ENCODE measurements at regions of chr9 and their contacts with region 1.

Region 1: DNA sequence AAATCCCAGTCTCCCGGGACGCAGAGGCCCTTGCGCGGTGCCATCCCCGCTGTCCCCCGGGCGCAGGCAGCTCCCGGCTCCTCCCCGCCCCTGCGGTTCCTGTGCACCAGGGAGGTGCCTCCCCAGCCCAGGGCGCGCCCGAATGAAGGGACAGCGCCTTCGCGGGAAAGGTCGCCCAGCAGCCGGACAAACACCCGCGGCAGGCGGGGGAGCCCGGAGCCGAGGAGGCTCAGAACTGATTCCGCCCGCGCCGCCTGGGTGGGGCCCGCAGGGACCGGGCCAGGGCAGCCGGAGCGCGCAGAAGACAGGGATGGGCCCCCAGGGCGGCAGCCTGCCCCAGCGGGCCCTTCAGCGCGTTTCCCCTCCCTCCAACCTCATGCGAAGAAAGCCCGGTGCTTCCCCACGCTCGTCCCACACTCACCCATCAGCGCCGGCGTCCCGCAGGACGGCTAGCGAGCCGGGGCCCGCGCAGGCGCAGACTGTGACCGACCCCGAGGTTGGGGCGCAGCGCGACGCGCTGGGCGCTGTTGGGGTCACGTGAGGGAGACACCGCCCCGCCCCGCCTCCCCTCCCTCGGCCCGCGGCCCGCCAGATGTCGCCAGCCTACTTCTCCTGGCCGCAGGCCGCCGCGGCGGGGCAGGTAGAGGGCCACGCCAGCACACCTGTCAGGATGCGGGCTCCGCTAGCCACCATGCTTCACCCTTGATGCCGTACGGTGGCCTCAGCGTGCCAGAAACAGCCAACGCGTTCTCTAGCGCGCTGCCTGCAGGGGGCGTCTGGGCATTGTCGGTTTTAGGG is at the start of gene SLC25A51:
- DNase-seq: peak; percentile 94
- H3K4me3 ChIP-seq: peak within 1 kb of the TSS; percentile 29 to 90 (median 74)
- H3K27ac ChIP-seq: peak within 1 kb of the TSS; percentile 5
- H3K4me1 ChIP-seq: peaks cover 21% of the 10 kb centered on the region
- H3K27me3 ChIP-seq: no peaks in the 10 kb centered on the region
- CTCF ChIP-seq: peak; percentile 98 to 100
- POLR2A ChIP-seq: peak; percentile 80
- total RNA-seq, gene SLC25A51: 36.2 and 38.3 TPM in 2 replicates

Region 2: DNA sequence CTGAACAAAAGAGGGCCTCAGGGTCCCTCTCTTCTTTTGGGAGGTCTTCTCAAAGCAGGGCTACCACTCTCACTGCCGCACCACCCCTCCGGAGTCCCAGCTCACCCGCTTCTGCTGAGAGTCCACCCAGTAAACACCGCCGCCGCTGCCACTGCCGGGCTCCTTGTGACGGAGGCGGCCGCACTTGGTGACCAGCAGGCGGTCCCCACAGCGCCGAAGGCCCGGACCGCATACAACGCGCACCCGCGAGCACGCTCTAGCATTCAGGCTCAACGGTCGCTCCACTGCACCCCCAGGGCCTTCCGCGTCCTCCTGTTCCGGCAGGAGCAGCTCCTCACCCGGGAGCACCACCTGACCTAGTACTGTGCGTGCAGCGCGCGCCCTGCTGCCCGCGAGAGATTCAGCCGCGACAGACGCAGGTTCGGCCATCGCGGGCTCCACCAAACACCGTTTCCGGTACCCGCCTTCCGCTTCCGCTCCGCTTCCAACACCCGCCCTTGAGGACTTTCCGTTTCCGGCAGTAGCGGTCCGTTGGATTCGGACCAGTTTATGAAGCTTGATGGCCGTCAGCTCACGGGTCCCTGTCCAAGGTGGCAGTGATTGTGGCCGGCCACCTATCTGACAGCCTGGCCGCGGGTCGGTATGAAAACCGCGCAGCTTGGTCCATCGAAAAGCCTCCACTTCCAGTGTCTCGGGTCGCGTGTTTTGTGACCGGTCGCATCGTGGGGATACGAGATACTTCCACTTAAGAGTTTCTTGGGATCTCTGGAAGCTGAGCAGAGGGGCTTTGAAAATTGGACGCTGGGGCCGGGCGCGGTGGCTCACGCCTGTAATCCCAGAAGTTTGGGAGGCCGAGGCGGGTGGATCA is 119.0 kb before region 1 on chr9 and contains the start of gene EXOSC3:
- CTCF ChIA-PET with region 1: interaction called, 3 read pairs
- POLR2A ChIA-PET with region 1: no interaction called
- dilution Hi-C with region 1: no loop called
- intact Hi-C with region 1: loop called (anchors 5 kb)
- DNase-seq: peak; percentile 91
- H3K4me3 ChIP-seq: peak within 1 kb of the TSS; percentile 42 to 80 (median 64)
- H3K27ac ChIP-seq: peak within 1 kb of the TSS; percentile 34
- H3K4me1 ChIP-seq: peaks cover 12% of the 10 kb centered on the region
- H3K27me3 ChIP-seq: no peaks in the 10 kb centered on the region
- CTCF ChIP-seq: no peak
- POLR2A ChIP-seq: peak; percentile 94
- total RNA-seq, gene EXOSC3: 38.0 and 39.1 TPM in 2 replicates

Region 3: DNA sequence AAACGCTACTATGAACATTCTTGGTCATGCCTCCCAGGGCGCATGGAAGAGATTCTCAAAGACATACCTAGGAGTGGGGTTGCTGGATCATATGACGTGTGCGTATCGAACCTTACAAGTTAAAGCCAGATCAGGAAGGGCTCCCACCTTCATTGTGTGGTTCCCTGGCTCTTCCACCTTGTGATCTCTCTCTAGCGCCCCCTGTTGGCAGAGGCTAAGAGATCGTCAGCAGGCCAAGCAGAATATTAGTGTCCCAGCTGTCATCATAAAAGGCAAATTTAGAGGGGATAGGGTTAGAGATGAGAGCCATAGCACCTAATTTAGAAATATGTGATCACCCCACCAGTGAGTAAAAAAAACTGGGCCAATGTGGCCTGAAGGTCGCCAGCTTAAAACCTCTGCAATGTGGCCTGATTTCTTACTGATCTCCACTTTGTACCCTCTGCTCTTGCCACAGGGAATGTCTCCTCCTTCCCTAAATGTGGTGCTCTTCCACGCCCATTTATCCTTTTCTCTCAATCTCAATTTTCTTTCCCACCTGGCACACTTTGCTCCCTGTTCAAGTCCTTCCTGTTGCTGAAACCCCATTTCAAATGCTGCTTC is 256.9 kb after region 1 on chr9:
- CTCF ChIA-PET with region 1: interaction called, 24 read pairs
- POLR2A ChIA-PET with region 1: no interaction called
- dilution Hi-C with region 1: no loop called
- intact Hi-C with region 1: loop called (anchors 2 kb)
- DNase-seq: peak; percentile 49
- H3K4me3 ChIP-seq: no peak overlapping the region
- H3K27ac ChIP-seq: no peak overlapping the region
- H3K4me1 ChIP-seq: no peaks in the 10 kb centered on the region
- H3K27me3 ChIP-seq: no peaks in the 10 kb centered on the region
- CTCF ChIP-seq: peak; percentile 77 to 86
- POLR2A ChIP-seq: no peak

Region 4: DNA sequence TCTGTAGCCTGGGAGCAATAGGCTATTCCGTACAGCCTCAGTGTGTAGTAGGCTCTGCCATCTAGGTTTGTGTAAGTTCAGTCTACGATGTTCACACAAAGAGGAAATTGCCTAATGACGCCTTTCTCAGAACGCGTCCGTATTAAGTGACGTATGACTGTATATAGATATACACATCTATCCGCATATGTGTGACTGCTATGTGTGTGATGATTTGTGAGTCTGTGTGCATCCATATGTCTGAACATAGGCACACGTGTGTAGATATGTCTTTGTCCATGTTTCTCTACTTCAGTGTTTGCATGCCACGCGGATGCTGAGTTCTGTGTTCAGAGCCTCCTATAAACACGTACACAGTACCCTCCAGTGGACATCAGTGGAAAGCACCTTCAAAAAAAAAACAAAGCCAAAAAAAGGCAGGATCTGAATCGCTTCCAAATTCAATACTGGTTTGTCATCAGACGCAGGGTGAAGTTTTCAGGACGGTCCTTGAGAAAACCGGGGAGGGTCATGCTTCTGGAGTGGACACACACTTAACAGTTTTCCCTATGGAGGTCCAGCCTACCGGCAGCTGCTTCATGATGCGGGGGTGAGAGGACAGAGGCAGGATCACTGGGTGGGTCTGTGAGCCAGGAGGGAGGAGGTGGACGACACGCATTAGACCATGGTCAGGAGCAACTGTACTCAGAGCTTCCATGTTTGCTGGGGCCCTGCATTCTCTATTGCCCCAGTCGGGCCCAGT is 459.2 kb after region 1 on chr9:
- CTCF ChIA-PET with region 1: no interaction called
- POLR2A ChIA-PET with region 1: no interaction called
- dilution Hi-C with region 1: no loop called
- intact Hi-C with region 1: loop called (anchors 2 kb)
- DNase-seq: peak; percentile 66
- H3K4me3 ChIP-seq: no peak overlapping the region
- H3K27ac ChIP-seq: no peak overlapping the region
- H3K4me1 ChIP-seq: no peaks in the 10 kb centered on the region
- H3K27me3 ChIP-seq: peaks cover 2 to 3% of the 10 kb centered on the region in 2 experiments
- CTCF ChIP-seq: peak; percentile 47 to 55
- POLR2A ChIP-seq: no peak

Measured in endothelial cell of umbilical vein (primary cell).